ENCODE measurements at regions of chr11 and their contacts with region 1.

Region 1: DNA sequence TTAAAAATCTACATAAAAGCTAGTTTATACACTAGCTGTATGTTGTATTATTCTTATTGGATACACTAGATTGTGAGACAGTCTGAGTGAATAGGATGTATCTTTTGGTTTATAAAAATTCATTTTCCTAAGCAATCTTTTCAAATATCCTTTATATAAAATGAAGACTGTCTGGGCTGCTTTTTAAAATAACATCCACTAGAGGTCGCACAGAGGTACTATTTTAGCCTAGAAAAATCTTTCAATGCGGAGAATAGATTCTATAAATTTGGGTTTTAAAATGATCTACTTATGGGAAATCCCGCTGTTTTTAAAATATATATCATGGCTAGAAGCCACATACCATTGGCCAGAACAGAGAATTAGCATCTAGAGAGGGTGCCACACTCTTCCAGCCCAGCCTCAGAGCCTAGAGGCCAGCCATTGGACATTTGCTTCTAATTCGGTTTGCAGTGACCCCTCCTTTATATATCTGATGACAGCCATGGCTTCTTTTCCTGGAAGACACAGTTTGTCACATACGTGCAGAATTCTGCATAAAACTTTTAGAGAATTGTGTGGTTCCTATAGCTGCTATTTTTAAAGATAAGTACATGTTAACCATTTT is 7.3 kb downstream of the C11orf97 start:
- DNase-seq: no peak
- H3K4me3 ChIP-seq: no peak overlapping the region
- H3K27ac ChIP-seq: no peak overlapping the region
- H3K4me1 ChIP-seq: peaks cover 0 to 7% (median 4%) of the 10 kb centered on the region in 6 donors
- H3K27me3 ChIP-seq: peaks cover 0 to 4% (median 0%) of the 10 kb centered on the region in 7 donors
- CTCF ChIP-seq: peak in 9 of 11 experiments; percentile 39 to 72 (median 62)
- POLR2A ChIP-seq: no peak

Region 2: DNA sequence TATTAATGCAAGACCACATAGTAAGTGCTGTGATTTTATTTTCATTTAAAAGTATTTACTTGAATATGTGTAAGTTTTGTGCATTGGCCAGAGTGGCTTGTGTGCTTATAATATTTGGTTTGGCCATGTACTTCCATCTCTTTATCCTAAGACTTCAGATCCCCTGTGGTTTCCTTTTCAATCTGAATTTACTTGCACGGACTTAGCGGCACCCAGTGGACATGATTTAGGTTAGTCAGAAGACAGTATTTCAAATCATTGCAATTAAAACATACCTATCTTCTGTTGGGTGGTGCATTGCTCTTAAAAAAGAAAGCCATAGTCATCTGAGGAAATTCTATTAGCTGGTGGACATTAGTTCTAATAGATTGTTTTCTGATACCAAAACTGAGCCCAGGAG is 78.3 kb after region 1 on chr11:
- intact Hi-C with region 1: loop called (anchors 5 kb)
- DNase-seq: no peak
- H3K4me3 ChIP-seq: no peak overlapping the region
- H3K27ac ChIP-seq: no peak overlapping the region
- H3K4me1 ChIP-seq: peaks cover 0 to 9% (median 7%) of the 10 kb centered on the region in 6 donors
- H3K27me3 ChIP-seq: no peaks in the 10 kb centered on the region
- CTCF ChIP-seq: no peak
- POLR2A ChIP-seq: no peak